ENCODE measurements at regions of chr4 and their contacts with region 1.

Region 1: DNA sequence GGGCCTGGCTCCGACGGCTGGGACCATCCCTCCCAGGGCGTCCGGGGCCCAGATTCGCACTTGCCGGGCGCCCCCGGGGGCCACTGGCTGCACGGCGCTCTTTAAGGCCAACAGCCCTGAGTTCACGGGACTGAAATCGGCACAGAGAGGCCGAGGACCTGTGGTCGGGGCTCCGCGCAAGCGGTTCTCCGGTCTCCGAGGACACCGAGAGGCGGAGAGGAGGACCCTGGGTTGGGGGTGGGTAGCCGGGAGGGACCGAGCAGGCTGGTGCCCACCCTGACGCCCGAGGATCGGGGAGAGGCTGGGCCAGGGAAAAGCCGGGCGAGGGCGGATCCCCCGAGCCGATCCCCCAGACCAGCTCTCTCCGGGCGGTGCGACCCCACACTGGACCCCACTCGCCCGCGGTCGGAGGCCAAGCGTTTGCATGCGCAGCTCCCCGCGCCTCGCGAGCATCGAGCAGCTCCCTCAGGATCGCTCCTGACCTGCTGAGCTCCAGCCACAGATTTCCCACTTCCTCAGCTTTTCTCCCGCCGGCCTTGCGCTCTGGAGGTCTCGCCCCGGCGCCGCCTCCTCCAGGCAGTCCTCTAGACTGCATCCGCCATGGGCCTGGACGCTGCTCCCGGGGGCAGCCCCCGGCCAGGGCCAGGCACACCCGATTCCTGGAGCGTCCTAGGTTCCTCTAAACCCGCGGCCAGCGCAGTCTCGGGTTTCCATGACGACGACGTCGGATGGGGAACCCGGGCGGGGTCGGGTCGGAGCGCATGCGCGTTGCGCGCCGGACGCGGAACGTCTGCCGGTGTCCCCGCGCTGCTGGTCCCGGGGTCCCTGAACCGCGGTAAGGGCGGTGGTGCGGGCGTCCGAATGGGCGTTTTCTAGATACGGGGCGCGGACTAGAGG is 17.6 kb upstream of the NAT8L start:
- DNase-seq: peak; percentile 80
- ATAC-seq: peak; percentile 76
- H3K4me3 Mint-ChIP-seq: peak overlapping the region; percentile 84
- H3K27ac Mint-ChIP-seq: peak overlapping the region; percentile 12
- H3K4me1 Mint-ChIP-seq: peaks cover 9% of the 10 kb centered on the region
- H3K27me3 Mint-ChIP-seq: peaks cover 20% of the 10 kb centered on the region
- CTCF ChIP-seq: no peak

Region 2: DNA sequence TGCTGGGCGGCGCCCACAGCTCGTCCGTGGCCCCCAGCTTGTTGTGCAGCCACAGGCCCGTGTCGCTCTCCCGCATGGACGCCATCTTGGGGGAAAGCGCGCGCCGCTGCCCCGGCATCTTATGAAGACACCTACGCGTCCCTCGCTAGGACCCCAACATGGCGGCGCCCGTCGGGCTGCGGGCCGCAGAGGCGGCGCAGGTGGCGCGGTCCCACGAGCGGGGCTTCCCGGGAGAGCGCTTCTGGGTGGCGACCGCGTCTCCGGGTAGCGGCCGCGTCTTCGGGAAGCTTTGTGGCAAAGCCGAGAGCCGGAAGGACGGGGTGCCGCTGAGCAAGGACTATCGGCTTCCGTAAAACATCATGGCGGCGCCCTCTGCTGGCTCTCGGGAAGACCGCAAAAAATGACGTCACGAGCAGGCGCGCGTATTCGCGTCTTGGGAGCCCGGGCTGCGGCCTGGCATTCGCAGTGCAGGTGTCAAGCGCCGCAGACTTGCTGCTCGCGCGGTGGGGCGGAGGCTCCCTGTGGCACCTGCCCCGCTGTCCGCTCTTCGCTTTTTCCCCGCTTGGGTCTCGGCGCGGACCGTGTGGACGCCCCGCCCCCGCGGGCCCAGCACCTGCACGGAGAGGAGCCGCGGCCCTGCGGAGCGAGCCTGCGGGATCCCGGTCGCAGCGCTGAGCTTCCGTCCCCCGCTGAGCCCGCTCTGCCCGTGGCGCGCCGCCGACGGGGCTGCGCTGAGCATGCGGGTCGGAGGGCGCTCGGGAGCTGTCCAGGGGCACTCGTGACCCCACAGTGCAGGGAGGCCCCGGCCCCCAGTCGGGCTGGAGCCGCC is 32.4 kb before region 1 on chr4 and contains the start of gene NELFA:
- CTCF ChIA-PET with region 1: no interaction called
- POLR2A ChIA-PET with region 1: interaction called, 3 read pairs
- intact Hi-C with region 1: loop called (anchors 1 kb)
- DNase-seq: peak; percentile 93
- ATAC-seq: peak; percentile 80
- H3K4me3 Mint-ChIP-seq: peak within 1 kb of the TSS; percentile 90
- H3K27ac Mint-ChIP-seq: peak within 1 kb of the TSS; percentile 91
- H3K4me1 Mint-ChIP-seq: peaks cover 32% of the 10 kb centered on the region
- H3K27me3 Mint-ChIP-seq: peaks cover 4% of the 10 kb centered on the region
- CTCF ChIP-seq: no peak
- total RNA-seq, gene NELFA: 44.7 and 49.9 TPM in 2 replicates

Region 3: GRCh38 chr4:2059034-2059725 is 17.7 kb after region 1 on chr4 and contains the start of gene NAT8L:
- CTCF ChIA-PET with region 1: no interaction called
- POLR2A ChIA-PET with region 1: no interaction called
- intact Hi-C with region 1: loop called (anchors 2 kb)
- DNase-seq: no peak
- ATAC-seq: peak; percentile 59
- H3K4me3 Mint-ChIP-seq: peak within 1 kb of the TSS; percentile 52
- H3K27ac Mint-ChIP-seq: no peak within 1 kb of the TSS
- H3K4me1 Mint-ChIP-seq: peaks cover 2% of the 10 kb centered on the region
- H3K27me3 Mint-ChIP-seq: peaks cover 27% of the 10 kb centered on the region
- CTCF ChIP-seq: no peak
- total RNA-seq, gene NAT8L: 0.15 and 0.24 TPM in 2 replicates

Region 4: GRCh38 chr4:2418650-2419571 is 377.4 kb after region 1 on chr4 and contains the start of gene CFAP99:
- CTCF ChIA-PET with region 1: no interaction called
- POLR2A ChIA-PET with region 1: no interaction called
- intact Hi-C with region 1: loop called (anchors 5 kb)
- DNase-seq: peak; percentile 93
- ATAC-seq: peak; percentile 91
- H3K4me3 Mint-ChIP-seq: peak within 1 kb of the TSS; percentile 91
- H3K27ac Mint-ChIP-seq: peak within 1 kb of the TSS; percentile 90
- H3K4me1 Mint-ChIP-seq: peaks cover 39% of the 10 kb centered on the region
- H3K27me3 Mint-ChIP-seq: peaks cover 28% of the 10 kb centered on the region
- CTCF ChIP-seq: no peak
- total RNA-seq, gene CFAP99: not detected in 2 replicates

Region 5: GRCh38 chr4:2714061-2714770 is 672.7 kb after region 1 on chr4:
- CTCF ChIA-PET with region 1: no interaction called
- POLR2A ChIA-PET with region 1: no interaction called
- intact Hi-C with region 1: no loop called
- DNase-seq: no peak
- ATAC-seq: no peak
- H3K4me3 Mint-ChIP-seq: no peak overlapping the region
- H3K27ac Mint-ChIP-seq: no peak overlapping the region
- H3K4me1 Mint-ChIP-seq: peaks cover 23% of the 10 kb centered on the region
- H3K27me3 Mint-ChIP-seq: no peaks in the 10 kb centered on the region
- CTCF ChIP-seq: no peak

Measured in activated B cell treated with CpG ODN at 0.5 μM for 24 hours (primary cell).